PC-3 (cell line): ENCODE measurements at regions of chr11 and their contacts with region 1.

Region 1: GRCh38 chr11:20397281-20397680 is 9.8 kb downstream of the PRMT3 start:
- DNase-seq: peak; percentile 55
- ATAC-seq: peak; percentile 89
- H3K4me3 ChIP-seq: no peak overlapping the region
- H3K27ac ChIP-seq: no peak overlapping the region
- H3K4me1 ChIP-seq: no peaks in the 10 kb centered on the region
- H3K27me3 ChIP-seq: no peaks in the 10 kb centered on the region
- CTCF ChIP-seq: peak; percentile 68

Region 2: GRCh38 chr11:20443596-20443995 is 46.3 kb after region 1 on chr11:
- CTCF ChIA-PET with region 1: interaction called, 8 read pairs
- POLR2A ChIA-PET with region 1: no interaction called
- intact Hi-C with region 1: loop called (anchors 1 kb)
- DNase-seq: peak; percentile 41
- ATAC-seq: peak; percentile 57
- H3K4me3 ChIP-seq: no peak overlapping the region
- H3K27ac ChIP-seq: no peak overlapping the region
- H3K4me1 ChIP-seq: no peaks in the 10 kb centered on the region
- H3K27me3 ChIP-seq: no peaks in the 10 kb centered on the region
- CTCF ChIP-seq: peak; percentile 58

Region 3: GRCh38 chr11:20511982-20512381 is 114.7 kb after region 1 on chr11:
- CTCF ChIA-PET with region 1: no interaction called
- POLR2A ChIA-PET with region 1: no interaction called
- intact Hi-C with region 1: no loop called
- DNase-seq: no peak
- ATAC-seq: no peak
- H3K4me3 ChIP-seq: no peak overlapping the region
- H3K27ac ChIP-seq: no peak overlapping the region
- H3K4me1 ChIP-seq: no peaks in the 10 kb centered on the region
- H3K27me3 ChIP-seq: no peaks in the 10 kb centered on the region
- CTCF ChIP-seq: no peak

Region 4: DNA sequence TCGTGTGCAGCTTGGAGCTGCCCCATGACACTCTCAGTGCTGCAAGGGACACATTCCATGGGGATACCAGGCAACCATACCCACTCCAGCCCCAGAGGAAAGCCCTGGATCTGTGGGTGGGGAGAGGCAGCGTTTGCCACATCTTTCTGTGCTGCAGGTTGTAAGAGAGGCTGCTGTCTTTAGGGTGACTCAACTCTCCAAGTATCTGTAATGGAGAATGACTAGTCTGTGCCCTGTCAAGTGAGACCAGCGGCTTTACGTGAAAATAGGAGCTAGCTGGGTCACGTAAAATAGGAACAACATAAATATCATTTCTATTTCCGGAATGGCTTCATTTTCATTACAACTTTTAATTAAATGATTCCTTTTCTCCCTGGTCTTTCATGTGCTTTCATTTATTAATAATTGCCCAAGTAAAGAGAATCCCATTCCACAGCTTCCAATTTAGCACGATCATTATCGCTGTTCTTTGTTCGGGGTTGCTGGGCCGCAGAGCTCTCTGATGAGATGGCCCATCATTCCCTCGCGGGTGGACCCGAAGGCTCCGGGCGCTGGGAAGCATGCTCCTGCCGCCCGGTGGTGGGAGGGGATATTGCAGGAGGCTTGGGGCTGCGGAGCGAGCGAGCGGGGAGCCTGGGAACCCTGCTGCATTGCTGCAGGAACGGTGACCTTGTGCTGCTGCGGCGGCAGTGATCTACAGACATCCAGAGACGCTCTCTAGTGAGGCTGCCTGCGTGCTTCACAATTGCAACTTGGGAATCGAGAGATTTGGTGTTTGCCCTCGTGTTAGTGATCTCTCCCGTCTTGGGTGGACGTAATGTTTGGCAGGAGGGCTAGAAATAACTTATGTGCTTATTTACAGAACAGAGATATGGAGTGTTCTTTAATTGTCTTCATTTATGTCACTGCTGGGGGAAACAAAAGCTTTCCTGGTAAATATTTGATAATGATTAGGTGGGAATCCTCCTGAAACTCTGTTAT is 212.7 kb after region 1 on chr11:
- CTCF ChIA-PET with region 1: interaction called, 7 read pairs
- POLR2A ChIA-PET with region 1: no interaction called
- intact Hi-C with region 1: loop called (anchors 1 kb)
- DNase-seq: peak; percentile 71
- ATAC-seq: peak; percentile 96
- H3K4me3 ChIP-seq: peak overlapping the region; percentile 51
- H3K27ac ChIP-seq: no peak overlapping the region
- H3K4me1 ChIP-seq: peaks cover 6% of the 10 kb centered on the region; the same call in 1 of the 2 replicates
- H3K27me3 ChIP-seq: peaks cover 20% of the 10 kb centered on the region
- CTCF ChIP-seq: peak; percentile 87